Naive thymus-derived CD4-positive, alpha-beta T cell (primary cell): ENCODE measurements at regions of chr15 and their contacts with region 1.

Region 1: GRCh38 chr15:82566690-82567089 is 26.4 kb upstream of the RPS17 start:
- DNase-seq: no peak
- ATAC-seq: no peak
- H3K4me3 ChIP-seq: no peak overlapping the region
- H3K4me3 Mint-ChIP-seq: no peak overlapping the region
- H3K27ac ChIP-seq: no peak overlapping the region
- H3K27ac Mint-ChIP-seq: no peak overlapping the region
- H3K4me1 ChIP-seq: no peaks in the 10 kb centered on the region
- H3K4me1 Mint-ChIP-seq: no peaks in the 10 kb centered on the region
- H3K27me3 ChIP-seq: no peaks in the 10 kb centered on the region
- H3K27me3 Mint-ChIP-seq: peaks cover 0 to 13% (median 8%) of the 10 kb centered on the region in 5 donors

Region 2: DNA sequence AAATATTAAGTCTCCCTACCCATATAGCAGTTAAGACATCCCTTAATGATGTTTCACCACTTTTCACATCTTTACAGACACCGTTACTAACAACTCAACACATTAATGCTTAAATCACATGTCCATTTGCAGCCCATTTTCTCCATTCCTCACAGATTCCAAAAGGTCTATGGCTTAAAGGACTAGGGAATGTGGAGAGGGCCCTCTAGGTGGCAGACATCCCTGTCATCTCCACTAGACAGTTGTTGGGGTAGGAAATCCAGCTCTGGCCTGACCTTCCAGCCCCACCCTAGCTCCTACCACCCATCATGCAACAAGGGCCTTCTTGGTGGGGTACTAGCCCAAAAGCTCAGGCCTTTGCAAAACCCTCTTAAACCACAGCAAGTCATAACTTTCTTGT is 55.3 kb after region 1 on chr15:
- CTCF ChIA-PET with region 1: no interaction called
- POLR2A ChIA-PET with region 1: no interaction called
- intact Hi-C with region 1: loop called in 1 of 2 experiments (anchors 10 kb)
- DNase-seq: no peak
- ATAC-seq: no peak
- H3K4me3 ChIP-seq: no peak overlapping the region
- H3K4me3 Mint-ChIP-seq: no peak overlapping the region
- H3K27ac ChIP-seq: no peak overlapping the region
- H3K27ac Mint-ChIP-seq: peak overlapping the region in 1 of 9 donors; percentile 33
- H3K4me1 ChIP-seq: no peaks in the 10 kb centered on the region
- H3K4me1 Mint-ChIP-seq: no peaks in the 10 kb centered on the region
- H3K27me3 ChIP-seq: no peaks in the 10 kb centered on the region
- H3K27me3 Mint-ChIP-seq: peaks cover 0 to 8% (median 4%) of the 10 kb centered on the region in 5 donors